Transverse colon (tissue), 4 donors: ENCODE measurements at regions of chr7 and their contacts with region 1.

Region 1: GRCh38 chr7:152675759-152676636 is at the start of gene XRCC2:
- DNase-seq: peak; percentile 93
- H3K4me3 ChIP-seq: peak within 1 kb of the TSS; percentile 61 to 87 (median 68)
- H3K27ac ChIP-seq: peak within 1 kb of the TSS; percentile 74 to 87 (median 82)
- H3K4me1 ChIP-seq: peaks cover 0 to 14% (median 8%) of the 10 kb centered on the region in 4 donors
- H3K27me3 ChIP-seq: no peaks in the 10 kb centered on the region
- CTCF ChIP-seq: no peak
- EP300 ChIP-seq: no peak
- POLR2A ChIP-seq: peak; percentile 82
- total RNA-seq, gene XRCC2: 0.55 to 14.5 (median 0.79) TPM in 3 of 4 donors, not detected in the other

Region 2: DNA sequence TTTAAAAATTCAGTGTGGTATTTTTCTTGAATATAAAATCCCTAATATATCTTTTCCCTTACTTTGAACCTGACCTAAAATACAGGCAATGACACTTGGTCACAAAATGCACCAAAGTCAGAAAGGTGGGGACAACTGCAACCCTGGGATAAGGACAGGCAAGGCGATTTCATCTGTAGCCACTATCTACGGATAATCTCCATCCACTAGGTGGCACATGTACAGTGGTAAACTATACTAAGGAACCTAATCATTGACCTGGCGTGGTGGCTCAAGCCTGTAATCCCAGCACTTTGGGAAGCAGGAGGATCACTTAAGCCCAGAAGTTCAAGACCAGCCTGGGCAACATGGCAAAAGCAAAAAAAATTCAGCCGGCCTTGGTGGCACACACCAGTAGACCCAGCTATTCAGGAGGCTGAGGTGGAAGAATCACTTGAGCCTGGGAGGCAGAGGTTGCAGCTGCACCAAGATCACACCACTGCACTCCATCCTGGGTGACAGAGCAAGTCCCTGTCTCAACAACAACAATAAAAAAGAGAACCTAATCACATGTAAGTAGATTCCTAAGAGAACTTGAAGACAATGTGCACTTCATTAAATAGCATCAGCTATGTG is 339.1 kb before region 1 on chr7:
- in situ Hi-C with region 1: loop called in 1 of 4 experiments (anchors 25 kb)
- intact Hi-C with region 1: no loop called
- DNase-seq: peak; percentile 10
- H3K4me3 ChIP-seq: no peak overlapping the region
- H3K27ac ChIP-seq: peak overlapping the region in 1 of 4 donors; percentile 7
- H3K4me1 ChIP-seq: peaks cover 6 to 48% (median 22%) of the 10 kb centered on the region in 4 donors
- H3K27me3 ChIP-seq: no peaks in the 10 kb centered on the region
- CTCF ChIP-seq: peak; percentile 42 to 63 (median 55)
- EP300 ChIP-seq: no peak
- POLR2A ChIP-seq: no peak

Region 3: DNA sequence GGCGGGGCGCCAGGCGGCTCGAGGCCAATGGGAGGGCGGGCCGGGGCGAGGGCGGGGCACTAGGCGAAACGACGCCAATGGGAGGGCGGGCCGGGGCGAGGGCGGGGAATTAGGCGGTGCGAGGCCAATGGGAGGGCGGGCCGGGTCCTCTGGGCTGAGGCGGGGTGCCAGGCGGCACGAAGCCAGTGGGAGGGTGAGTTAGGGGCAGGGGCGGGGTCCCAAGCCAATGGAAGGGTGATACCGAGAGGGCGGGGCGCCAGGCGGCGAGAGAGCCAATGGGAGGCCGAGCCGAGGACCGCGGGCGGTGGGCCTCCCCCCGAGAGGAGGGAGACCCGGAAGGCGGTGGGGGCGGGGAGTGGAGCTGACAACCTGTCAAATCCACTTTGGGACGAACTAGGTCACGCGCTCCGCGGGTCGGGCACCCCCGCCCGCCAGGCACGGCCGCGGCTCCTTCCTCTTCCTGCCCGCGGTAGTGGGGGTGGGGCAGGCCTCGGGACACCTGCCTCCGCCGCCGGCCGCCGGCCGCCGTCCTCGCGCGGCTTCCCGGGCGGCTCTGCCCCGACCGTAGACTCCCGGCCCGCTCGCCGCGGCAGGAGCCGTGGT is 212.2 kb before region 1 on chr7:
- in situ Hi-C with region 1: loop called in 1 of 4 experiments (anchors 25 kb)
- intact Hi-C with region 1: no loop called
- DNase-seq: peak; percentile 100
- H3K4me3 ChIP-seq: peak overlapping the region; percentile 96 to 98 (median 96)
- H3K27ac ChIP-seq: peak overlapping the region; percentile 99 to 100 (median 100)
- H3K4me1 ChIP-seq: peaks cover 4 to 22% (median 7%) of the 10 kb centered on the region in 4 donors
- H3K27me3 ChIP-seq: no peaks in the 10 kb centered on the region
- CTCF ChIP-seq: no peak
- EP300 ChIP-seq: no peak
- POLR2A ChIP-seq: no peak

Region 4: GRCh38 chr7:152780935-152781334 is 104.9 kb after region 1 on chr7:
- in situ Hi-C with region 1: no loop called
- intact Hi-C with region 1: no loop called
- DNase-seq: no peak
- H3K4me3 ChIP-seq: no peak overlapping the region
- H3K27ac ChIP-seq: no peak overlapping the region
- H3K4me1 ChIP-seq: no peaks in the 10 kb centered on the region
- H3K27me3 ChIP-seq: no peaks in the 10 kb centered on the region
- CTCF ChIP-seq: no peak
- EP300 ChIP-seq: no peak
- POLR2A ChIP-seq: no peak